ENCODE measurements at regions of chr22 and their contacts with region 1.

Region 1: GRCh38 chr22:17742527-17742902 is 31.8 kb downstream of the BID start:
- DNase-seq: peak; percentile 56 to 77
- ATAC-seq: peak; percentile 68 to 77 (median 75)
- H3K4me3 ChIP-seq: no peak overlapping the region
- H3K27ac ChIP-seq: no peak overlapping the region
- H3K4me1 ChIP-seq: peaks cover 11% of the 10 kb centered on the region
- H3K27me3 ChIP-seq: no peaks in the 10 kb centered on the region
- CTCF ChIP-seq: peak; percentile 69

Region 2: DNA sequence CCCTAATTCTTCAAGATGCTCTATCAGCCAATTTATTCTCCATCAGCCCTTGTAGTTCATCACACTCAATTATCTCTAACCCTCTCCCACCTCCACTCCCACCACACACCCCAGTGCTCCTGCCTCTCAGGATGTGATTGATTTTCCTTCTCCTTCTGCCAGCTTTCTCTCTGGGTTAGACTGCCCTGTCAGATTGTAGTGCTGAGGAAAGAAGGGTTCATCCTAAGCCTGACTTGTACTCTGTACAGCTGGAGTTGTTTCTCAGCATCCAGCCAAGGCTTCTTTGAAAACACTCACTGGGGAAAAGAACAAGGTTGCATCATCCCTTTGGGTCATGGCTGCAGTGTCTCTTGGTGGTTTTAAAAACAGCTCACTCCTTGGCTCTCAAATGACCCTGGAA is 312.1 kb before region 1 on chr22:
- intact Hi-C with region 1: no loop called
- DNase-seq: no peak
- ATAC-seq: peak; percentile 82 to 91 (median 88)
- H3K4me3 ChIP-seq: no peak overlapping the region
- H3K27ac ChIP-seq: peak overlapping the region; percentile 82
- H3K4me1 ChIP-seq: peaks cover 63% of the 10 kb centered on the region
- H3K27me3 ChIP-seq: no peaks in the 10 kb centered on the region
- CTCF ChIP-seq: no peak

Region 3: DNA sequence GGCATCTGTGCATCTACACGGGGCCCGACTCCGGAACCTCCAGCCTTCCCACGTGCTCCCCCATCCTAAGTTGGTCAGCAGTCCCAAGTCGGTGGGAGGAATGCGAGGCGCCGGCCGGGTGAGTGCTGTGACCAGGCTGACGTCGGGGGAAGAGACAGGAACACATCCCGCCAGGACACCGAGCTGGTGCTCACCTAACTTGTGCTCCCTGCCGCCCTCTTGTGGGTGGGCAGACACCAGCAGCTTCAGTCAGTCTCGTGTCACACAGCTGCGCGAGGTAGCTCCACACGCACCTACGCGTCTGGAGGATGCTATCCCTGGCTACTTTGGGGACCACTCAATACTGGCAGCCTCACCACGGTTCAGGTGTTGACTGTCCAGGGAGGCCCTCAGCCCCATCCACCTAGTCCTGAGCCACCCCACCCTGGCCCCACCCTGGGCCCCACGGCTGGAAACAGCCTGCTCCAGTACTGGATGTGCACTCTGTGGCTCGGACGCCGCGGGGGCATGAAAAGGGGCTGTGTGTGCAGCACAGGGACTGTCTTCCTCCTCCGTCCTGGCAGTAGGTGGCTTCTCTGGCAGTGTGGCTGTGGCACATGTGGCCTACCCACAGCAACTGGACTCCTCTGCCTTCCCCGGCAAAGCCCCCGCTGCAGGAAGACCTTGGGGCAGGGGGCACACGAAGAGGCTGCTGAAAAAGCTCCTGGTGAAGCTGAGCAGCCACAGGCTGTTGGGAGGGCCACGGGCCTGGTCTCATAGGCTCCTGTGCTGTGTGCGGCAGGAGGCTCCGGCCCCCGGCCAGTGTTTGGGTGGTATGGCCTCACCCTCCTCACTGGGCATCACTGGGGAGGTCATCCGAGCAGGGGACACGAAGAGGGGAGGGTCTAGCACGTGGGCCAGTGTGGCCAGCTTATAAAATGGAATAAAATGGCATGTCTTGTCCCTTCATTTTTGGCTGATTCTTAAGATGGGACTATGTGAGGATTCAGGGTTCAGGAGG is 43.0 kb after region 1 on chr22:
- intact Hi-C with region 1: loop called (anchors 2 to 5 kb)
- DNase-seq: peak; percentile 79 to 91
- ATAC-seq: peak; percentile 59 to 76 (median 70)
- H3K4me3 ChIP-seq: no peak overlapping the region
- H3K27ac ChIP-seq: peak overlapping the region; percentile 73
- H3K4me1 ChIP-seq: peaks cover 28% of the 10 kb centered on the region
- H3K27me3 ChIP-seq: no peaks in the 10 kb centered on the region
- CTCF ChIP-seq: peak; percentile 67

Measured in psoas muscle (tissue), 8 donors.